Testis (tissue), 5 donors: ENCODE measurements at regions of chr15 and their contacts with region 1.

Region 1: DNA sequence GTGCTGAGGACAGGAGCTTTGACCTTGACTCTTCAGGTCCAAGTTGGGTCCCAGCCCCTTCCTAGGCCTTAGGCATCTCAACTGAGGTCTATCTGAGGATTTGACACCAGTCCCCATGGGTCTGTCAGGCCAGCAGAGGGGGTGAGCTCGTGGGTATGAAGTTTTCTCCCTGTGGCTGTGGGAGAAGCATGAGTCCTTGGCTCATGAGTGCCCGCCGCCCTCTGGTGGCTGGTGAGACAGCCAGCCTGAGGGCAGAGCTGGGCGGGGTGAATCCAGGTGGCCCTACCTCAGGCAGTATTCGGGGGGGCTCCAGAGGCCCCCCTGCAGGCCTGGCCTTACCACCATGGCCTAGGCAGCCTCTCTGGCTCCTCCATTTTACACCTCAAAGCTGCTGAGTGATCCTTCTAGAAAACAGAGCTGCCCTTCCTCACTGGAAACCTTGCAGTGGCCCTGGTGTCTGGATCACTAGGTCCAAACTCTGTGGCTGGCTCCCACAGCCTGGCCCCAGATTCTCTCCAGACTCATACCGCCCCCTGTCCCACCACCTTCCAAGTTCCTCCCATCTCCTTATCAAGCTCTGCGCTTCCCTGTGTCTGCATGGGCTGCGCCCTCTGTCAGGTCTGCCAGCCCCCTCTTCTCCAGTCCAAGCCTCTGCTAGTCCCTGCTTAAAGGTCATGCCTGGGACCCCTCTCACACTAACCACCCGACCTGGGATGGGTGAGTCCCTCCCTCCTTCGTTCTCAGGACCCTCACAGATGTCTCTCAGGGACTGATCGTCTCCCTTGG is 16.1 kb downstream of the SH2D7 start:
- DNase-seq: peak; percentile 86
- H3K4me3 ChIP-seq: no peak overlapping the region
- H3K27ac ChIP-seq: no peak overlapping the region
- H3K4me1 ChIP-seq: no peaks in the 10 kb centered on the region
- H3K27me3 ChIP-seq: no peaks in the 10 kb centered on the region
- CTCF ChIP-seq: peak; percentile 87 to 95 (median 93)
- POLR2A ChIP-seq: no peak

Region 2: GRCh38 chr15:77966540-77967290 is 141.8 kb before region 1 on chr15:
- intact Hi-C with region 1: loop called (anchors 5 kb)
- DNase-seq: no peak
- H3K4me3 ChIP-seq: no peak overlapping the region
- H3K27ac ChIP-seq: no peak overlapping the region
- H3K4me1 ChIP-seq: peaks cover 6% of the 10 kb centered on the region
- H3K27me3 ChIP-seq: no peaks in the 10 kb centered on the region
- CTCF ChIP-seq: peak; percentile 51 to 74 (median 71)
- POLR2A ChIP-seq: no peak

Region 3: DNA sequence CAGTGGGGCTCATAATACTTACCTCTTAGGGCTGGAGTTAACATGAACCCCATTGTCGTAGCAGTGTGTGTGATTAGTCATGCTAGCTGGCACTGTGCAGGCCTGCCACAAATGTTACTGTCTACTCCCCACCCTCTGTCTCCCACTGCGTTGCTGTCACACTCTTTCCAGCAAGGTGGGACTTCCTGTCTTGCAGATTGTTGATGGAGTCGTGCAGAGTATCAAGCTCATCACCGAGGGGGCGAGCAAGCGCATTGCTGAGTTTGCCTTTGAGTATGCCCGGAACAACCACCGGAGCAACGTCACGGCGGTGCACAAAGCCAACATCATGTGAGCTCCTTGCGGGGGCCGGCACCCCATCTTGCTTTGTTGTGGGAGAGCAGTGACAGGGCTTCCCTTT is 53.5 kb after region 1 on chr15:
- intact Hi-C with region 1: no loop called
- DNase-seq: peak; percentile 89
- H3K4me3 ChIP-seq: no peak overlapping the region
- H3K27ac ChIP-seq: peak overlapping the region; percentile 56 to 73
- H3K4me1 ChIP-seq: peaks cover 4% of the 10 kb centered on the region
- H3K27me3 ChIP-seq: no peaks in the 10 kb centered on the region
- CTCF ChIP-seq: no peak
- POLR2A ChIP-seq: no peak

Region 4: DNA sequence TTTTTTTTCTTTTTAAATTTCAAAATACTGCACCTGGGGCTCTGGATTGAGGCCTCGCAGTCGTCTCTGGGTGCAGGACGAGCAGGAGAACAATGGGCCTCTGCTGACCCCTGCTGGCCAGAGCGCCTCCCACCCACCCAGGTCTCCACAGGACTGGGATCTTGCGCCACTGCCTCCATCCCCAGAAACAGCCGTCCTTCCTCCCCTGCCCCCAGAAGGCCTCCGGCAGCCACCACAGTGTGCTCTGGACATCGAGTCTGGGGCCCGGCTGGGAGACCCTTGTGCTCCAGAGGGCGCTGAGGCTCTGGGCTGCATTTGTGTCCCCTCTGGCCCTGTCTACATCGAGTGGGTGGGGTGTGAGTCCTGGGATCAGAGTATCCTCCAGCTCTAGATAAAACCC is 132.5 kb after region 1 on chr15:
- intact Hi-C with region 1: loop called (anchors 5 kb)
- DNase-seq: peak; percentile 92
- H3K4me3 ChIP-seq: no peak overlapping the region
- H3K27ac ChIP-seq: no peak overlapping the region
- H3K4me1 ChIP-seq: no peaks in the 10 kb centered on the region
- H3K27me3 ChIP-seq: no peaks in the 10 kb centered on the region
- CTCF ChIP-seq: peak; percentile 72 to 86 (median 85)
- POLR2A ChIP-seq: no peak